H1 (cell line): ENCODE measurements at regions of chr5 and their contacts with region 1.

Region 1: GRCh38 chr5:36403632-36404311 is 102.1 kb upstream of the RANBP3L start:
- DNase-seq: no peak
- H3K4me3 ChIP-seq: no peak overlapping the region
- H3K27ac ChIP-seq: no peak overlapping the region
- H3K4me1 ChIP-seq: no peaks in the 10 kb centered on the region; a peak in 1 of 7 replicates
- H3K27me3 ChIP-seq: no peaks in the 10 kb centered on the region
- CTCF ChIP-seq: no peak
- EP300 ChIP-seq: no peak
- POLR2A ChIP-seq: no peak
- RAD21 ChIP-seq: no peak

Region 2: GRCh38 chr5:36414869-36415282 is 11.1 kb after region 1 on chr5:
- CTCF ChIA-PET with region 1: interaction called, 30 read pairs
- POLR2A ChIA-PET with region 1: no interaction called
- DNase-seq: no peak
- H3K4me3 ChIP-seq: no peak overlapping the region
- H3K27ac ChIP-seq: no peak overlapping the region
- H3K4me1 ChIP-seq: peaks cover 4 to 17% (median 8%) of the 10 kb centered on the region in 4 experiments; a peak in 5 of 7 replicates
- H3K27me3 ChIP-seq: peaks cover 6 to 36% (median 24%) of the 10 kb centered on the region in 4 experiments; a peak in 6 of 7 replicates
- CTCF ChIP-seq: peak in 1 of 3 experiments; percentile 48; a peak in 1 of 4 replicates
- EP300 ChIP-seq: no peak
- POLR2A ChIP-seq: no peak
- RAD21 ChIP-seq: peak; percentile 56 to 70

Region 3: DNA sequence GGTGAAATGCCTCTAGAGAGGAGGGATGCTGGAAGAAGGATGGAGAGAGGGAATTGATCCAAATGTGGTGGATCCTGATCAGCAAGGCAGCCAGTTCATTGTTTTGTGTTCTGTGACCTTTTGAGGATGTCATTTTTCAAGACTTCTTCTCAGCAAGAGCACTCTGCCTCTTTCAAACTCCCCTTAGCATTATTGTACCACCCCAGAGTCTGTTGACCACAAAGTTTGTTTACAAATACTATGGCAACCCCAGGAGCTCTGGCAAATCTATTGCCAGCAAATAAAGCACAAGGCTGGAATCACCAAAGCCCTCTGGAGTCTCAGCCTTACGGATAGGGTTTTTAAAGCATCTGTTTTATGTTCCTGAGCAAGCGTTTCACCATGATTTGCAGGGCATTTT is 126.4 kb after region 1 on chr5:
- CTCF ChIA-PET with region 1: no interaction called
- POLR2A ChIA-PET with region 1: no interaction called
- DNase-seq: no peak
- H3K4me3 ChIP-seq: no peak overlapping the region
- H3K27ac ChIP-seq: no peak overlapping the region; the same call in 1 of the 2 replicates
- H3K4me1 ChIP-seq: peaks cover 0 to under 1% (median 0%) of the 10 kb centered on the region in 4 experiments; a peak in 1 of 7 replicates
- H3K27me3 ChIP-seq: no peaks in the 10 kb centered on the region
- CTCF ChIP-seq: no peak
- EP300 ChIP-seq: no peak
- POLR2A ChIP-seq: no peak
- RAD21 ChIP-seq: no peak